ENCODE measurements at regions of chr11 and their contacts with region 1.

Region 1: DNA sequence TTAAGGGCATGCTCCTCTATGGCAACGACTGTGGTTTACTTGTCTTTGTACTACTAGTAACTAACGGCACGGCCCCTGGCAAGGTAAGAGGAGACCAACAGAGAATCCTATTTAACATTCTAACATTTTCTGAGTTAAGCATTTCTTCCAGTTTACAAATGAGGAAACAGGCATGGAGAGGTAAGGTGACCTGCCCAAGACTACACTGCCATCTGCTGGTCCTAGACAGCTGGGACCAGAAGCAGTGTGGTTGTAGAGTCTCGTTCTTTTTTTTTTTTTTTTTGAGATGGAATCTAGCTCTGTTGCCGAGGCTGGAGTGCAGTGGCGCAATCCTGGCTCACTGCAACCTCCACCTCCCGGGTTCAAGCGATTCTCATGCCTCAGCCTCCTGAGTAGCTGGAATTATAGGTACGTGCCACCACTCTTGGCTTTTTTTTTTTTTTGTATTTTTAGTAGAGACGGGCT is 5.3 kb upstream of the RAPSN start:
- DNase-seq: peak; percentile 80
- H3K4me3 ChIP-seq: no peak overlapping the region
- H3K27ac ChIP-seq: no peak overlapping the region
- H3K4me1 ChIP-seq: peaks cover 0 to 8% of the 10 kb centered on the region in 2 experiments; a peak in 1 of 4 replicates
- H3K27me3 ChIP-seq: no peaks in the 10 kb centered on the region
- CTCF ChIP-seq: peak; percentile 91
- EP300 ChIP-seq: no peak
- RAD21 ChIP-seq: peak; percentile 82

Region 2: DNA sequence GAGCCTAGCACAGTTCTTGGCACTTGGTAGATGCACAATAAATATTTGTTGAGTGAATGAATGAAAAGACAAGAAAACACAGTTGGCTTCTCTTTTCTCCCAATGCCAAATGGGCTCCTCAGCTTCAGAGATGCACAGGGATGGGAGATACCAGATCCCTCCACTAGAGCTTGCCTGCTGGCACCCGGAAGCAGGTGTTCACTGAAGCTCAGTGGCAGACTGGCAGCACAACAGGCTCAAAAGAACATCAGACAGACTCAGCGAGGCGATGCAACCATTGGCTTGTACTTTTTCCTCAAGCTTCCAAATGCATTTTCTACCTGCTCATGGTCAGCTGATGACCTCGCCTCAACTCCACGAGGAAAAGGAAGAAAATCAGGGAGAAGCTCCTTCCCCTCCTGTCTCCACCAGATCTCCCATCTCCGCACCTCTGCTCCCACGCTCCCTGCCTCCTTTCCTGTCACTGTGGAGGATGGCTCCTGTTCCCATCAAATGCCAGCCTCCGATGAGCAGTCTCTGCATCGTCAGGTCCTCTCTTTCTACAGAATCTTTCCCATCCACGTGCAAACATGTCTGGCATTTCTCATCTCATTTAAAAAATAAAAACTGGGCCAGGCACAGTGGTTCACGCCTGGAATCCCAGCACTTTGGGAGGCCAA is 11.0 kb before region 1 on chr11:
- CTCF ChIA-PET with region 1: interaction called, 16 read pairs
- POLR2A ChIA-PET with region 1: no interaction called
- DNase-seq: peak; percentile 71
- H3K4me3 ChIP-seq: no peak overlapping the region
- H3K27ac ChIP-seq: no peak overlapping the region
- H3K4me1 ChIP-seq: no peaks in the 10 kb centered on the region; a peak in 1 of 4 replicates
- H3K27me3 ChIP-seq: no peaks in the 10 kb centered on the region
- CTCF ChIP-seq: peak; percentile 6; the same call in 1 of the 2 replicates
- EP300 ChIP-seq: no peak
- RAD21 ChIP-seq: no peak

Region 3: GRCh38 chr11:47466701-47467250 is 12.6 kb after region 1 on chr11:
- CTCF ChIA-PET with region 1: interaction called, 14 read pairs
- POLR2A ChIA-PET with region 1: no interaction called
- DNase-seq: peak; percentile 57
- H3K4me3 ChIP-seq: no peak overlapping the region
- H3K27ac ChIP-seq: peak overlapping the region in 1 of 2 experiments; percentile 68; a peak in 3 of 4 replicates
- H3K4me1 ChIP-seq: peaks cover 19 to 25% of the 10 kb centered on the region in 2 experiments; a peak in 3 of 4 replicates
- H3K27me3 ChIP-seq: no peaks in the 10 kb centered on the region
- CTCF ChIP-seq: no peak
- EP300 ChIP-seq: no peak
- RAD21 ChIP-seq: no peak

Region 4: DNA sequence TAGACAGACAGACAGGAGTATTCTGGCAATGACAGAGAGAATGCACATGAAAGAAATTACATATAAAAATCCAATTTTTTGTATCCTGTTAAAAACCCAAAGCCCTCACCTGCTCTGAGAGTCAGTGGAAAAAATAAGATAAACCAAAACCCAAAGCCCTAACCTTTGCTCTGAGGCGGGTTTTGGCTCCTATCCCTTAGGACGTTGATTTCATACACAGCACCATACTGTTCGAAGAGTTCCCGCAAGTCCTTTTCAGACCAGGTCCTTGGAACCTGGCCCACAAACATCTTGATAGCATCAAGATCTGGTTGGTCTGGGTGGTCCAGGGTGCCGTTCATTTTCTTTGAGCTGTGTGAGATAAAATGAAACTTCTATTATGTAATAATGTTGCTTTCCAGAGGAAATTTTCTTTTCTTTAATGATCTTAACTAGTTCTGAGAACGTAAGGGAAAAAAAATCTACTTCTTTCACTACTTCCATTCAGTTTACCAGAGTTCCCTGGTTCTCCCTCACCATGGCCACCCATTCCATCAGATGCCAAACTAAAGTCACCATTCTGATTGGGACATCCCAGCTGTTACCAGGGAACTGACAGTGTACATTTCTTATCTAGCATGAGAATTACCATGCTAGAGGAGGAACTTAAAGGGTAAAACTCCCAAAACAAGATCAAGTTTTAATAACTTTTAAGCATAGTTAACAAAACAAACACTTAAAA is 34.6 kb after region 1 on chr11:
- CTCF ChIA-PET with region 1: no interaction called
- POLR2A ChIA-PET with region 1: no interaction called
- DNase-seq: no peak
- H3K4me3 ChIP-seq: no peak overlapping the region
- H3K27ac ChIP-seq: peak overlapping the region in 1 of 2 experiments; percentile 47; a peak in 3 of 4 replicates
- H3K4me1 ChIP-seq: peaks cover 0 to 5% of the 10 kb centered on the region in 2 experiments; a peak in 2 of 4 replicates
- H3K27me3 ChIP-seq: no peaks in the 10 kb centered on the region
- CTCF ChIP-seq: no peak
- EP300 ChIP-seq: no peak
- RAD21 ChIP-seq: no peak

Measured in SK-N-SH (cell line).